HCT116 (cell line): ENCODE measurements at regions of chr6 and their contacts with region 1.

Region 1: GRCh38 chr6:72619883-72620696 is 1.8 kb upstream of the KCNQ5 start:
- DNase-seq: no peak
- ATAC-seq: no peak
- H3K4me3 ChIP-seq: no peak overlapping the region
- H3K27ac ChIP-seq: no peak overlapping the region
- H3K4me1 ChIP-seq: no peaks in the 10 kb centered on the region
- H3K27me3 ChIP-seq: peaks cover 11% of the 10 kb centered on the region; the same call in 1 of the 2 replicates
- CTCF ChIP-seq: no peak
- POLR2A ChIP-seq: no peak
- RAD21 ChIP-seq: no peak

Region 2: DNA sequence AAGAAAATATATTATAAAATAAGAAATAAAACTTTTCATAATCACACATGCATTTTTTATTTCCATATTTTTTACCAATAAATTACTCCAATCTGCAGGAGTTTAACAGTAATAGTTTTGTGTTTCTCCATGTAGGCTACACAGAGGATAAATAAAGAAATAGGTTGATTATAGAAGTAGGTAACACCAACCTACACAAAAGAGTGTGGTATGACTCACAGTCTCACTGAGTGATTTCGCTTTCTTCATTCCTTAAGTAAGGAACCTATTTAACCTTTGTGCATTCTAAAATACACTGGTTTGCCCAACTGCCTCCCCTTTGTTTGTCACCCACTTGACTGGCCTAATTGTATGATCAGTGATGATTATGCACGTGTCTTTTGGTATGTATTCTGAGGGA is 978.0 kb before region 1 on chr6:
- CTCF ChIA-PET with region 1: no interaction called
- POLR2A ChIA-PET with region 1: no interaction called
- RAD21 ChIA-PET with region 1: no interaction called
- intact Hi-C with region 1: no loop called
- DNase-seq: no peak
- ATAC-seq: no peak
- H3K4me3 ChIP-seq: no peak overlapping the region
- H3K27ac ChIP-seq: no peak overlapping the region
- H3K4me1 ChIP-seq: no peaks in the 10 kb centered on the region
- H3K27me3 ChIP-seq: no peaks in the 10 kb centered on the region
- CTCF ChIP-seq: no peak
- POLR2A ChIP-seq: no peak
- RAD21 ChIP-seq: no peak

Region 3: GRCh38 chr6:73062837-73063236 is 442.7 kb after region 1 on chr6:
- CTCF ChIA-PET with region 1: no interaction called
- POLR2A ChIA-PET with region 1: no interaction called
- RAD21 ChIA-PET with region 1: no interaction called
- intact Hi-C with region 1: no loop called
- DNase-seq: no peak
- ATAC-seq: no peak
- H3K4me3 ChIP-seq: no peak overlapping the region
- H3K27ac ChIP-seq: no peak overlapping the region
- H3K4me1 ChIP-seq: no peaks in the 10 kb centered on the region
- H3K27me3 ChIP-seq: peaks cover 49% of the 10 kb centered on the region
- CTCF ChIP-seq: no peak
- POLR2A ChIP-seq: no peak
- RAD21 ChIP-seq: no peak

Region 4: GRCh38 chr6:73129653-73130443 is 509.8 kb after region 1 on chr6:
- CTCF ChIA-PET with region 1: interaction called, 91 read pairs
- POLR2A ChIA-PET with region 1: interaction called, 3 read pairs
- RAD21 ChIA-PET with region 1: interaction called, 4 to 8 read pairs
- intact Hi-C with region 1: loop called (anchors 1 kb)
- DNase-seq: peak; percentile 66
- ATAC-seq: peak; percentile 91
- H3K4me3 ChIP-seq: no peak overlapping the region
- H3K27ac ChIP-seq: no peak overlapping the region
- H3K4me1 ChIP-seq: peaks cover 0 to 11% of the 10 kb centered on the region in 2 experiments; a peak in 1 of 4 replicates
- H3K27me3 ChIP-seq: peaks cover 25% of the 10 kb centered on the region
- CTCF ChIP-seq: peak; percentile 88 to 99 (median 99)
- POLR2A ChIP-seq: no peak
- RAD21 ChIP-seq: peak; percentile 93

Region 5: GRCh38 chr6:73180763-73181619 is 560.9 kb after region 1 on chr6:
- CTCF ChIA-PET with region 1: interaction called, 4 read pairs
- POLR2A ChIA-PET with region 1: no interaction called
- RAD21 ChIA-PET with region 1: no interaction called
- intact Hi-C with region 1: loop called (anchors 2 kb)
- DNase-seq: peak; percentile 39
- ATAC-seq: peak; percentile 95
- H3K4me3 ChIP-seq: no peak overlapping the region
- H3K27ac ChIP-seq: no peak overlapping the region
- H3K4me1 ChIP-seq: no peaks in the 10 kb centered on the region
- H3K27me3 ChIP-seq: peaks cover 82% of the 10 kb centered on the region
- CTCF ChIP-seq: peak; percentile 63 to 88 (median 79)
- POLR2A ChIP-seq: no peak
- RAD21 ChIP-seq: peak; percentile 79